ENCODE measurements at regions of chr11 and their contacts with region 1.

Region 1: GRCh38 chr11:10413268-10413667 is 41.8 kb upstream of the AMPD3 start:
- DNase-seq: peak in 8 of 9 experiments; percentile 20 to 81 (median 53)
- ATAC-seq: peak; percentile 93
- H3K4me3 ChIP-seq: no peak overlapping the region
- H3K4me3 Mint-ChIP-seq: no peak overlapping the region
- H3K27ac ChIP-seq: no peak overlapping the region
- H3K27ac Mint-ChIP-seq: no peak overlapping the region
- H3K4me1 ChIP-seq: peaks cover 29% of the 10 kb centered on the region
- H3K4me1 Mint-ChIP-seq: peaks cover 40% of the 10 kb centered on the region
- H3K27me3 ChIP-seq: no peaks in the 10 kb centered on the region
- H3K27me3 Mint-ChIP-seq: no peaks in the 10 kb centered on the region
- CTCF ChIP-seq: peak; percentile 51

Region 2: DNA sequence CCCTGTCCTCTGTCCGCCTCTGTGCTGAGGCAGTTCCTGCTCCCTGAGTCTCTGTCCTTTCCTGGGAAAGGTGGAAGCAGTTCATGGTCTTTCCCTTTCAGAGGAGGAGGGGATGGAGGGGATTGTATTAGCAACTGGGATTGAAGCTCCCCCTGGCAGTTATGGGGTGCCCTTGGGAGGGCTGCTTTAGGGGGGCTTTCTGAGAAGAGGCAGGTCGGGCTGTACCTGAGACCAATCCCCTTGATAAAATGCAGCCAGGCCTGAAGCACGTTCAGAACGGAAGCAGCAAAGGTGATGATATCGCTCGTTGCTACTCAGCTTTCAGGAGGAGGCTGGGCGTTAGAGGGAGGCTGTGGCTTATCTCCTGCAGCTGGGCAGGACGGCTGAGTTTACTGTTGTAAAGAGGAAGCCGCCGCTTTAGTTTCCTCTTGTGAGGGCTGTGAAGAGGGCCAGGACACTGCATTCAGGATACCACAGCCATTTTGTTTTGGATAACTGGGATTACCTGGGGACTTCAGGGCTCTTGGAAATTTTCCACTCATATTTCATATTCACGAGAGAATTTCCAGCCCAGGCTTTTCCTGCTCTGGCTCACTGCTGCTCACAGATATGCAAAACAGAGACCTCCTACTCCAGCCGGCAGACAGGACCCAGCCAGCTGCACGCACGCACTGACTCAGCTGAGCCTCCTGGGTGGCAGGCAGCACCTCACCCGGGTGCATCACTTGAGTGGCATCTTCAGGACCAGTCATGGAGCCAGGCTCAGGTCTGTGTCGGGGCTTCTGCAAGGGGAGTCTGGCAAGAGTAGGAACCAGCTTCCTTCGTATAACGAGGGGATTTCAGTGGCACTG is 42.6 kb after region 1 on chr11:
- CTCF ChIA-PET with region 1: interaction called, 32 read pairs
- POLR2A ChIA-PET with region 1: interaction called, 5 read pairs
- intact Hi-C with region 1: loop called in 1 of 2 experiments (anchors 2 kb)
- DNase-seq: peak; percentile 30 to 87 (median 74)
- ATAC-seq: peak; percentile 74
- H3K4me3 ChIP-seq: peak overlapping the region; percentile 52 to 54
- H3K4me3 Mint-ChIP-seq: peak overlapping the region; percentile 91
- H3K27ac ChIP-seq: peak overlapping the region; percentile 10 to 67
- H3K27ac Mint-ChIP-seq: peak overlapping the region; percentile 98
- H3K4me1 ChIP-seq: peaks cover 58% of the 10 kb centered on the region
- H3K4me1 Mint-ChIP-seq: peaks cover 81% of the 10 kb centered on the region
- H3K27me3 ChIP-seq: no peaks in the 10 kb centered on the region
- H3K27me3 Mint-ChIP-seq: no peaks in the 10 kb centered on the region
- CTCF ChIP-seq: no peak

Region 3: GRCh38 chr11:10514210-10514609 is 100.9 kb after region 1 on chr11:
- CTCF ChIA-PET with region 1: interaction called, 12 read pairs
- POLR2A ChIA-PET with region 1: no interaction called
- intact Hi-C with region 1: loop called in 1 of 2 experiments (anchors 5 kb)
- DNase-seq: no peak
- ATAC-seq: no peak
- H3K4me3 ChIP-seq: no peak overlapping the region
- H3K4me3 Mint-ChIP-seq: no peak overlapping the region
- H3K27ac ChIP-seq: no peak overlapping the region
- H3K27ac Mint-ChIP-seq: no peak overlapping the region
- H3K4me1 ChIP-seq: no peaks in the 10 kb centered on the region
- H3K4me1 Mint-ChIP-seq: peaks cover 5% of the 10 kb centered on the region
- H3K27me3 ChIP-seq: no peaks in the 10 kb centered on the region
- H3K27me3 Mint-ChIP-seq: no peaks in the 10 kb centered on the region
- CTCF ChIP-seq: no peak

Region 4: DNA sequence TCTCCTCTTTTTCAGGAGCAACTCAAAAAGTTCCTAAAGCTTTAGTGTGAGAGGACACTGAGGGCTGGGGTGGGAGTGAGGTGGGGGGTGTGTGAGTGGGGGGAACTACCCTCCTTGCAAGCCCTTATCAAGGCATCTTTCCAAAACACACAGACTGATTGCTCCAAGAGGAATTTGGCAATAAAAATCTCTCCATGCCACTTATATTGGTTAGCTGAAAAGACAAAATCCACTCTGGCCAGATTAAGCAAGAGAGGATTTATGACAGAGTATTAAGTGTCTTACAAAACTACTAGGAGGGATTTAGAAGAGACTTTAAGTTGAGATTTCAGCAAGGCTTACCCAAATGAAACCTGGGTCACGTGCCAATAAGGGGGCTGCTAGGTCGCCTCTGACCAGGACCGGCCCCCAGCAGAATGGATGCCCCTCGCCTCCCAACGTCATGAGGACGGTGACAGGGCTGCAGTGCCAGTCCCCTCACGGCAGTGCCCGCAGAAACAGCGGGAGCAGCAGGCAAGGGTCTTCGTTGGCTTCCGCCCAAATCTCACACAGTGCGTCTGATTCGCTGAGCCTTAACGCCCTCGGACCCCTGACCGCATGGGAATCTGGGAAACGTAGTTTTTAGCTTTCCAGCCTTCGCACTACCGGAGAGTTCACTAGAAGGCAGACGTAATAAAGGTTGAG is 315.7 kb after region 1 on chr11:
- CTCF ChIA-PET with region 1: interaction called, 25 read pairs
- POLR2A ChIA-PET with region 1: no interaction called
- intact Hi-C with region 1: no loop called
- DNase-seq: no peak
- ATAC-seq: no peak
- H3K4me3 ChIP-seq: no peak overlapping the region
- H3K4me3 Mint-ChIP-seq: no peak overlapping the region
- H3K27ac ChIP-seq: no peak overlapping the region
- H3K27ac Mint-ChIP-seq: no peak overlapping the region
- H3K4me1 ChIP-seq: peaks cover 11% of the 10 kb centered on the region
- H3K4me1 Mint-ChIP-seq: peaks cover 18% of the 10 kb centered on the region
- H3K27me3 ChIP-seq: peaks cover 0 to 3% of the 10 kb centered on the region in 2 experiments
- H3K27me3 Mint-ChIP-seq: peaks cover 8% of the 10 kb centered on the region
- CTCF ChIP-seq: no peak

Measured in CD8-positive, alpha-beta T cell (primary cell).